HAP-1 (cell line): ENCODE measurements at regions of chr15 and their contacts with region 1.

Region 1: DNA sequence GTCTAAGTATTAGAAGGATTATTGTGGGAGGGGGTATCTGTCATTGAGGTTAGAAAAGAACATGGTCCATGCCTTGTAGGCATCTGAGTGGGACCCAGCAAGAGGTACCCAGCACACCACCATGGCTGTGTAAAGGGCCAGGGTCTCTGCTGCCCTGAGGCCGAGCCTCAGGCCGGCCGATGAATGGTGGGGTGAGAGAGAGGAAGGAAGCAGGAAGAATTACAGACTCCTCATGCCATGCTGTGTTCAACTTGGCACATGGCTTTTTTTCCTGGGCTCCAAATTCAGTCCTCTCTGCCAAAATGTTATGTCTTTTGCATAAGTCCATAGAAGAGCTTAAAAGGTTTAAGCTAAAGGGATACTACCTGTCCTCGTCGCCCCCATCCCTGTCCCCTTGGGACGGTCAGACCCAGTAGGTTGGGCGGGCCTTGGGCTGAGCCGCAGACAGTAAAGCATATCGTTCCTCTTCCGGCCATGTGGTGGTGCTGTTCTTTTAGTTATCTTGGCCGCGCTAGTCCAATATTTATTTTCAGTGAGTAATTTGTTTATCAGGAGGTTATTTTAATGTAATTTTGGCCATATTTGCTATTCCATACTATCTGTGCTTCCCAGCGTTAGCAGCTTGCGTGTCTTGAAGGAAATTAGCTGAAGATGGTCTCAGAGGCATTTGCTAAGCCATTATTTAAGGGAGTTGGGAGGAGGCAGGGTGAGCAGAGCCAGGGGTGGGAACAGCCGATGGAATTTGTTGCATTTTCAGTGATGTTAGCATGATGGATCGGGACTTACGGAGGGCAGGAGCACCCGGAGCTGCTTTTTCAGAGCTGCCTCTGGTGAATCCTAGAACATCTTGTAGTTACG is 152.4 kb downstream of the AGBL1 start:
- DNase-seq: peak; percentile 78 to 86
- H3K4me3 ChIP-seq: no peak overlapping the region
- H3K4me1 ChIP-seq: peaks cover 12% of the 10 kb centered on the region
- H3K27me3 ChIP-seq: peaks cover 13% of the 10 kb centered on the region

Region 2: GRCh38 chr15:85865070-85865684 is 366.9 kb before region 1 on chr15:
- in situ Hi-C with region 1: loop called (anchors 5 kb)
- DNase-seq: peak; percentile 70 to 77
- H3K4me3 ChIP-seq: no peak overlapping the region
- H3K4me1 ChIP-seq: no peaks in the 10 kb centered on the region
- H3K27me3 ChIP-seq: peaks cover 30% of the 10 kb centered on the region

Region 3: GRCh38 chr15:86502301-86502700 is 270.2 kb after region 1 on chr15:
- in situ Hi-C with region 1: no loop called
- DNase-seq: no peak
- H3K4me3 ChIP-seq: no peak overlapping the region
- H3K4me1 ChIP-seq: no peaks in the 10 kb centered on the region
- H3K27me3 ChIP-seq: peaks cover 3% of the 10 kb centered on the region; the same call in 1 of the 2 replicates

Region 4: GRCh38 chr15:86541540-86541939 is 309.4 kb after region 1 on chr15:
- in situ Hi-C with region 1: no loop called
- DNase-seq: no peak
- H3K4me3 ChIP-seq: no peak overlapping the region
- H3K4me1 ChIP-seq: 0 out of 2 replicates have a peak, but pooled peaks cover 3% of the 10 kb centered on the region
- H3K27me3 ChIP-seq: no peaks in the 10 kb centered on the region